Endothelial cell of umbilical vein (primary cell): ENCODE measurements at regions of chr12 and their contacts with region 1.

Region 1: GRCh38 chr12:19273482-19274330 is 144.2 kb downstream of the PLEKHA5 start:
- DNase-seq: peak; percentile 96
- H3K4me3 ChIP-seq: no peak overlapping the region
- H3K27ac ChIP-seq: peak overlapping the region; percentile 71
- H3K4me1 ChIP-seq: peaks cover 19% of the 10 kb centered on the region
- H3K27me3 ChIP-seq: no peaks in the 10 kb centered on the region
- CTCF ChIP-seq: no peak
- POLR2A ChIP-seq: no peak

Region 2: GRCh38 chr12:19129486-19130223 is 144.1 kb before region 1 on chr12 and contains the start of gene PLEKHA5:
- CTCF ChIA-PET with region 1: interaction called, 3 read pairs
- POLR2A ChIA-PET with region 1: no interaction called
- dilution Hi-C with region 1: no loop called
- intact Hi-C with region 1: loop called (anchors 5 kb)
- DNase-seq: peak; percentile 31
- H3K4me3 ChIP-seq: peak within 1 kb of the TSS; percentile 62 to 100 (median 69)
- H3K27ac ChIP-seq: peak within 1 kb of the TSS; percentile 34
- H3K4me1 ChIP-seq: peaks cover 8% of the 10 kb centered on the region
- H3K27me3 ChIP-seq: no peaks in the 10 kb centered on the region
- CTCF ChIP-seq: no peak
- POLR2A ChIP-seq: peak; percentile 16
- total RNA-seq, gene PLEKHA5: 12.7 and 13.4 TPM in 2 replicates

Region 3: DNA sequence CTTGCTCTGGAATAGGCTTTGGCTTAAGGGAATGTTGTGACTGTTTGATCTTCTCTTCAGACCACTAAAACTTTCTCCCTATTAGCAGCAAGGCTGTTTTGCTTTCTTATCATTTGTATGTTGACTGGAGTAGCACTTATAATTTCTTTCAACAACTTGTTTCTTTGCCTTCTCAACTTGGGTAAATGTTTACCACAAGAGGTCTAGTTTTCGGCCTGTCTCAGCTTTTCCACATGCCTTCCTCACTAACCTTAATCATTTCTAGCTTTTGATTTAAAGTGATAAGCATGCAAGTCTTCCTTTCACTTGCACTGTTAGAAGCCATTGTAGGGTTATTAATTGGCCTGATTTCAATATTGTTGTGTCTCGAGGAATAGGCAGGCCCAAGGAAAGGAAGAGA is 38.9 kb after region 1 on chr12:
- CTCF ChIA-PET with region 1: no interaction called
- POLR2A ChIA-PET with region 1: no interaction called
- dilution Hi-C with region 1: no loop called
- intact Hi-C with region 1: no loop called
- DNase-seq: no peak
- H3K4me3 ChIP-seq: no peak overlapping the region
- H3K27ac ChIP-seq: no peak overlapping the region
- H3K4me1 ChIP-seq: no peaks in the 10 kb centered on the region
- H3K27me3 ChIP-seq: no peaks in the 10 kb centered on the region
- CTCF ChIP-seq: no peak
- POLR2A ChIP-seq: no peak

Region 4: GRCh38 chr12:19641235-19642080 is 367.8 kb after region 1 on chr12:
- CTCF ChIA-PET with region 1: no interaction called
- POLR2A ChIA-PET with region 1: no interaction called
- dilution Hi-C with region 1: no loop called
- intact Hi-C with region 1: no loop called
- DNase-seq: no peak
- H3K4me3 ChIP-seq: no peak overlapping the region
- H3K27ac ChIP-seq: no peak overlapping the region
- H3K4me1 ChIP-seq: no peaks in the 10 kb centered on the region
- H3K27me3 ChIP-seq: no peaks in the 10 kb centered on the region
- CTCF ChIP-seq: no peak
- POLR2A ChIP-seq: no peak